Ascending aorta (tissue), 2 donors: ENCODE measurements at regions of chr11 and their contacts with region 1.

Region 1: DNA sequence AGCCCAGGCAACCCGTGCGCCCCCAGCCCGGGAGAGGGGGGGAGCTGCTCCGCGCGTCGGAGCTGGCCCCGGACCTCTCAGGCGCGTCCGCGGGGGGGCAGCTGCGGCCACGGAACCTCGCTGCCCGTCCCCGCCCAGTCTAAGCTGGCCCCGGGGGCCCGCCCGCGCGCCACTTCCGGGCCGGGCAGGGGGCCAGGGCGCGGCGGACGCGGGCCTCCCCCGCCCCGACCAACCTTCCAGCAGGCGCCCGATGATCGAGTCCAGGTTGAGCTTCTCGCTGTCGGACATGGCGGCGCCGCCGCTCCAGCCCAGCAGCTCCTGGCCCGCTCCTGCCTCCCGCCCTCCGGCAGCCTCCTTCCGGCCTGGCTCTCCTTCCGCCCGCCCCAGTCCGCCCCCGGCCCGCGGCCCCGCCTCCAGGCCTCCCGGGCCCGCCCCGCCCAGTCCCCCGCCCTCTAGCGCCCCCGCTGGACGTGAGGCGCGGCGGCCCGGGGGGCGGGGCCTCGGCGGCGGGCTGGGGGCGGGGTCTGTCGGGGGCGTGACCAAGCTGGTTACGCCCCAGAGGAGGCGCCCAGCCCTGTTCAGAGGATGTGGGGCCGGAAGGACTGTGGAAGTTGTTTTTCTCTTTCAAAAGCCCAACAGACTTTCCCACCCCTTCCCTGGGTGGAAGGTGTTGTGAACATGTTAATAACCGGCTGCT is at the start of gene PPP1CA:
- DNase-seq: peak; percentile 63 to 94
- H3K4me3 ChIP-seq: peak within 1 kb of the TSS; percentile 88 to 99
- H3K27ac ChIP-seq: peak within 1 kb of the TSS; percentile 90 to 94
- H3K4me1 ChIP-seq: peaks cover 15 to 19% of the 10 kb centered on the region in 2 donors
- H3K27me3 ChIP-seq: no peaks in the 10 kb centered on the region
- CTCF ChIP-seq: peak; percentile 21 to 60 (median 38)
- total RNA-seq, gene PPP1CA: 113 TPM

Region 2: GRCh38 chr11:67420646-67421420 is 19.2 kb after region 1 on chr11:
- intact Hi-C with region 1: loop called (anchors 2 kb)
- DNase-seq: peak; percentile 82 to 98
- H3K4me3 ChIP-seq: peak overlapping the region; percentile 75 to 90
- H3K27ac ChIP-seq: peak overlapping the region; percentile 90 to 98
- H3K4me1 ChIP-seq: peaks cover 9 to 47% of the 10 kb centered on the region in 2 donors
- H3K27me3 ChIP-seq: no peaks in the 10 kb centered on the region
- CTCF ChIP-seq: peak in 1 of 3 experiments; percentile 25

Region 3: DNA sequence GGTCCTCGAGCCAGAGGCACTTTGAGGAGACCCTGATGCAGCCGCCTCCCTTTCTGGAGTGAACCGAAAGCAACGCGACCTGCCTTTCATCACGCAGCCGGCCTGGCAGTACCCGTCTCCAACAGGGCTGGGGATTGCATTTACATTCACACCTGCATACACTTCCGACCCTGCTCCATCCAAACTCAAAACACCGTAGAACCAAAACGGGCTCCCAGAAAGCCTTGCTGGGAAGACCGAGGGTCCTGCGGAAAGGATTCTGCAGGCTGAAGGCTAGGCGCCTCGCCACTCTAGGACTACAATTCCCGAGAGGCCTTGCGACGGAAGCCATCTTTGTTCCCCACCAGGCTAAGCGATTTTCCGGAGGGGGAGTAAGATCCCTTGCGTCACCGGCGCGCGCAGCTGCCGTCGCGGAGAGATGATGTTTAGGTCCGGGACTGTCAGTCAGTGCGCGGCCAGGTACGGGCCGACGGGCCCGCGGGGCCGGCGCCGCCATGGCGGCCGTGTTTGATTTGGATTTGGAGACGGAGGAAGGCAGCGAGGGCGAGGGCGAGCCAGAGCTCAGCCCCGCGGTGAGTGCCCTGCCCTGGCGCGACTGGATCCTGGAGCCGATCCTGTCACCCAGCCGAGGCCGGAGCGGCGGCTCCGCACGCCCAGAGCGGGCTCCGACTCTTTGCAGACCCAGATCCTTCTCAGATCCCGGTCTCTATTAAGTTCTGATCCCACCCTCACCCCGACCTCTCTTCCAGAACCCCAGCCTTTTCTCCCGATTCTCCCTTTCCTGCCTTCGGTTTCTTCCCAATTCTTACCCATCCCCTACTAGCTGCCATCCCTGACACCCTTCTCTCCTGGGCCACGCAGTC is 26.6 kb after region 1 on chr11 and contains the start of gene RPS6KB2:
- intact Hi-C with region 1: loop called (anchors 1 kb)
- DNase-seq: peak; percentile 96 to 99
- H3K4me3 ChIP-seq: peak within 1 kb of the TSS; percentile 75 to 94
- H3K27ac ChIP-seq: peak within 1 kb of the TSS; percentile 86 to 91
- H3K4me1 ChIP-seq: peaks cover 6 to 16% of the 10 kb centered on the region in 2 donors
- H3K27me3 ChIP-seq: no peaks in the 10 kb centered on the region
- CTCF ChIP-seq: no peak
- total RNA-seq, gene RPS6KB2: 72.3 TPM

Region 4: DNA sequence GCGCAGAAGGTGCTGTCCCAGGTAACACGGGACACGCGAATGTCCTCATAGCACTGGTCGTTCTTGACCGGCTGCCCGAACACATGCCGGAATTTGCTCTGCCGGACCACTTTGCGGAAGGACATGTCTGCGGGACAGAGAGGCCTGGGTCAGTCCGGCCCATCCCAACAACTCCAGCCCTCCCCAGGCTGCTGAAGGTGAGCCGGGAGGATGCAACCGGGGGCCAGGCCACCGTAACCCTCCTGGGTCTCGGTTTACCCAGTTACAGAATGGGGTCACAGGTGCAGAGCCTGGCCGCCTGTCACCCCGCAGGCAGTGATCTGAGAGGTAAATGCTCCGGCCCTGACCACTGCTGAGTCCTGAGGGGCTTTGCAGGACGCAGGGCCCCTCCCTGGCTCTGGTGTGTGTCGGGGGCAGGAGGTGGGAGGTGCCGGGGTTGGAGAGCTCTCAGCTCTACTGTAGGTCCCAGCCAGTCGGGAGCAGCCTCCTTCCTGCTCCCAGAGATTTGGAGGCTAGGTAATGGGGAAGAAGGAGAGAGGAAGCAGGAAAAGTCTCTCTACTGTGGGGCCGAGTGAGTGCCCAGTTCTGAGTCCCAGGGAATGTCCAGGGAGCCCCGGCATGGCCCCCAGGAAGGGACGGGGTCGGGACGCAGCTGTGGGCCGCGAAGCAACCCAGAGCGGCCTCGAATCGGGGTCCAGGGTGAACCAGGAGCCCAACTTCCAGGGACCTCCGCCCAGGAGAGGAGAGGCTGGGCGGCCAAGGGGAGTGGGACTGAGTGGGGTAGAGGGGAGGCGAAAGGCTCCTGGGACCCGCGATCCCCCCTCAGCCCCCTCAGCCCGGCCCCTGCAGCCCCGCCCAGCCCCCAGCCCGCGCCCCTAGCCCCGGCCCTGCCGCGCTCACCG is 41.1 kb after region 1 on chr11:
- intact Hi-C with region 1: loop called (anchors 1 kb)
- DNase-seq: no peak
- H3K4me3 ChIP-seq: peak overlapping the region; percentile 89 to 99
- H3K27ac ChIP-seq: peak overlapping the region; percentile 94 to 98
- H3K4me1 ChIP-seq: peaks cover 8 to 13% of the 10 kb centered on the region in 2 donors
- H3K27me3 ChIP-seq: no peaks in the 10 kb centered on the region
- CTCF ChIP-seq: no peak

Region 5: DNA sequence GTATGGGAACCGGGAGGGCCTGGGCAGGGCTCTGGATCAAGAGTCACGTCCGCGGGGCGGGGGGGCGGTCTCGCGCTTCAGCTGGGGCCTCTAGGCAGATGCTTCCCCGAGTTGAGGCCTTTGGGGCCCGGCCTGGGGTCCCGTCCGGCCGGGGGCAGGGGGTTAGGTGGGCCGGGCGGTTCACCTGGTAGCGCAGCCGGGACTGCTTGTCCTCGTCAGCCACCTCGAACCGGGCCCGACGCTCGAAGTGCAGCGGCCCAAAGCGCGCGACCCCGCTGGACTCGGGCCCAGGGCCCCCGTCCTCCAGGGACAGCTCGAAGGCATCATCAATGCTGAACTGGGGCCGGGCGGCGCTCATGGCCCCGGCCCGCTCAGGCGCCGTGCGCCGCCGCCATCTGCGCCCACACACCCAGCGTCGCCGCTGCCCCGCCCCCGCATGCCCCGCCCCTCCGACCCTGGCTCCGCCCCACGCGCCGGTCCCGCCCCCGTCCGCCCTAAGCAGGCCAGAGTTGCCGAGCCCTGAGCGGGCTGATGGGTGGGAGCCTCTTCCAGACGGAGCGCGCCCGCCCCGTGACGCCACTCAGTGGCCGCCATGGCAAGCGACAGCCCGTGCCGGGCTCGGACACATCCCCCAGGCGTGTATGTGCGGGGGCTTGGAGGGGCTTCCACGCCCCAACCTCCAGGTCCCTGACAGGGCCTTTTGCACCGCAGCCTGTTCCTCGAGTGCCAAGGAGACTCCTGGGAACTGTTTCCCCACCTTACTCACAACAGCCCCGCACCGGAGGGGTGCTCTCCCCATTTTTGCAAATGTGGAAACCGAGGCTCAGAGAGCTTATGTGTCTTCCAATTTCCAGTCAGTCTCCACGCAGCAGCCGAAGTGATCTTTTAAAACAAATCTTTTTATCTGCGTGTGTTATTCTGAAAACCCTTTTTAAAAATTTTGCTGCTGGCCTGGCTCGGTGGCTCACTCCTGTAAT is 67.5 kb after region 1 on chr11 and contains the start of gene TMEM134:
- intact Hi-C with region 1: loop called (anchors 1 kb)
- DNase-seq: peak; percentile 58 to 95
- H3K4me3 ChIP-seq: peak within 1 kb of the TSS; percentile 61 to 69
- H3K27ac ChIP-seq: peak within 1 kb of the TSS; percentile 71 to 89
- H3K4me1 ChIP-seq: peaks cover 3 to 19% of the 10 kb centered on the region in 2 donors
- H3K27me3 ChIP-seq: no peaks in the 10 kb centered on the region
- CTCF ChIP-seq: peak; percentile 59 to 64 (median 61)
- total RNA-seq, gene TMEM134: 189 TPM

Region 6: GRCh38 chr11:67482825-67483798 is 81.5 kb after region 1 on chr11 and contains the start of gene AIP:
- intact Hi-C with region 1: loop called (anchors 5 kb)
- DNase-seq: peak; percentile 92 to 99
- H3K4me3 ChIP-seq: peak within 1 kb of the TSS; percentile 53 to 66
- H3K27ac ChIP-seq: peak within 1 kb of the TSS; percentile 84 to 87
- H3K4me1 ChIP-seq: peaks cover 7 to 15% of the 10 kb centered on the region in 2 donors
- H3K27me3 ChIP-seq: no peaks in the 10 kb centered on the region
- CTCF ChIP-seq: peak; percentile 20 to 28 (median 22)
- total RNA-seq, gene AIP: 116 TPM